ENCODE measurements at regions of chr3 and their contacts with region 1.

Region 1: DNA sequence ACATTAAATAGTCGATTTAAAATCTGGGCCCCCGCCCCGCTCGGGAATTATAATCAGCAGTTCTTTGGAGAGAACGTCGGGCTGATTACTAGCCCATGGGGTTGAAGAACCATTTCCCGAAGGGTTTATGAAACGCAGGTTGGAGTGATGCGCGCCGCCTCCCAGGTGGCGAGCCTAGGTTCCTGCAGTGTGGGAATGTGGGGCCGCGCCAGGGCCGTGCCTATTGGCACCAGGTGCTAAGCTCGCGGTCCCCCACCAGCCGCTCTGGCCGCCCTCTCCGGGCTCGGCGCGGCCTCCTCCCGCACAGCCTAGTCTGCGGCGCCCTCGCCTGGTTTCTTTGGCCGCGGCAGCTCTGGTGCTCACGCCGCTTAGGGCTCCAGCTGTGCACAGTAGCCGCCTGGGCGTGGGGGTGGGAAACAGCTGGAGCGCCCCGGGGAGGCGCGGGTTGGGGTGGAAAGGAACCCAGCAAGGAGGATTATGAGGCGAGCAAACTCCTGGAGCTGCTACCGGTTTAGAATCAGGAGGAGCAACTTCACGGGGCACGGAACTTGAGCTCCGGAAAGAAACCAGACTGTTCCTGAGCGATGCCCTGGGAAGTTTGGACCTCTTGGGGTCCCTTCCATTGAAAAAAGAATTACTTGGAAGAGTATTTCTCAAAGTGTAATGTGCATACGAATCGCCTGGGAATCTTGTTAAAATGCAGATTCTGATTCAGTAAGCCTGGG is 5.6 kb upstream of the MECOM start:
- DNase-seq: peak in 5 of 7 donors; percentile 36 to 58 (median 51)
- H3K4me3 ChIP-seq: peak overlapping the region in 1 of 4 donors; percentile 36
- H3K27ac ChIP-seq: no peak overlapping the region
- H3K4me1 ChIP-seq: peaks cover 4 to 11% of the 10 kb centered on the region in 2 donors
- H3K27me3 ChIP-seq: peaks cover 79% of the 10 kb centered on the region
- CTCF ChIP-seq: peak; percentile 29 to 56 (median 42)
- POLR2A ChIP-seq: no peak

Region 2: DNA sequence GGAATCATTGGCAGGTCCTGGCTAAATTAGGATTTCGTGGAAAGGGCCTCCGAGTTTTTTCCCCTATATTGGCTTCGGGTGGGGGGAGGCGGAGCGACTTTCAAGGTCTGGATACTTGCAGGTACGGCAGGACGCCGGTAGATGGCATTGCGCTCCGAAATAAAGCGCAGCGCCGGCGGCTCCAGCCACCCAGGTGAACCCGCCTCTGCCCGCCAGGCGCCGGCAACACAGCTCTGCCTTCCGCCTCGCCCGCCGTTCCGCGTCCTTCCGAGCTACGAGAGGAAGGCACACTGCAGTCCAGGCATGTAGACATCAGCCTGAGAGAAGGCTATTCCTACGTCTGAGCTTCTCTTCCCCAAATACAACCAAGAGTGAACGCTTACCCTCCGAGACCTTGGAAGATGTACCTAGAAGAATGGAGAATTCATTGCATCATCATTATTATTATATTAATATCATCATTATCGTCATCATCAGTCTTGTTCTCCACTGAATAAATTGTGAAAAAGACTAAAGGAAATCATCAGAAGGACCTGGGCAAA is 519.7 kb before region 1 on chr3:
- intact Hi-C with region 1: loop called in 1 of 2 experiments (anchors 5 kb)
- DNase-seq: peak; percentile 68 to 88 (median 80)
- H3K4me3 ChIP-seq: no peak overlapping the region
- H3K27ac ChIP-seq: no peak overlapping the region
- H3K4me1 ChIP-seq: peaks cover 0 to 21% of the 10 kb centered on the region in 2 donors
- H3K27me3 ChIP-seq: peaks cover 52% of the 10 kb centered on the region
- CTCF ChIP-seq: peak; percentile 50 to 81 (median 66)
- POLR2A ChIP-seq: no peak

Region 3: GRCh38 chr3:169404520-169404890 is 264.6 kb before region 1 on chr3:
- intact Hi-C with region 1: no loop called
- DNase-seq: no peak
- H3K4me3 ChIP-seq: no peak overlapping the region
- H3K27ac ChIP-seq: no peak overlapping the region
- H3K4me1 ChIP-seq: no peaks in the 10 kb centered on the region
- H3K27me3 ChIP-seq: no peaks in the 10 kb centered on the region
- CTCF ChIP-seq: no peak
- POLR2A ChIP-seq: no peak